Activated naive CD4-positive, alpha-beta T cell treated with anti-CD3 and anti-CD28 coated beads for 36 hours (primary cell): ENCODE measurements at regions of chr7 and their contacts with region 1.

Region 1: GRCh38 chr7:24965831-24966709 is 13.9 kb downstream of the OSBPL3 start:
- DNase-seq: peak; percentile 68
- H3K4me3 Mint-ChIP-seq: peak overlapping the region; percentile 17
- H3K27ac Mint-ChIP-seq: peak overlapping the region; percentile 77
- H3K4me1 Mint-ChIP-seq: peaks cover 77% of the 10 kb centered on the region
- H3K27me3 Mint-ChIP-seq: no peaks in the 10 kb centered on the region

Region 2: DNA sequence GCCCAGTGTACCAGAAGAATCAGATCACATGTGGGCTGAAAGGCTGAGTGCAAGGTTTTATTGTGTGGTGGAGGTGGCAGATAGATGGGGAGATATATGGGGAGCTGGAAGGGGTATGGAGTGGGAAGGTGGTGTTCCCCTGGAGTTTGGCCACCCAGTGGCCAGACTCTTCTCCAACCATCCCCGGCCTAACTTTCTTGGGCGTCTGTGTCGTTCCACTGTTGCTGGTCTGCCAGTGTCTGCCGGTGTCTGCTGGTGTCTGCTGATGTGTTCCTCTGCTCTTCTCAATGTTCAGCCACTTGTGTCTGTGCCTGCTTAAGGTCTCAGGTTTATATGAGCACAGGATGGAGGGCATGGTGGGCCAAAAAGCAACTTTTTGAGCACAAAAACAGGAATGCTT is 471.2 kb before region 1 on chr7:
- CTCF ChIA-PET with region 1: no interaction called
- intact Hi-C with region 1: no loop called
- DNase-seq: no peak
- H3K4me3 Mint-ChIP-seq: no peak overlapping the region
- H3K27ac Mint-ChIP-seq: no peak overlapping the region
- H3K4me1 Mint-ChIP-seq: no peaks in the 10 kb centered on the region
- H3K27me3 Mint-ChIP-seq: peaks cover 8% of the 10 kb centered on the region

Region 3: GRCh38 chr7:24764972-24765744 is 200.9 kb before region 1 on chr7:
- CTCF ChIA-PET with region 1: no interaction called
- intact Hi-C with region 1: no loop called
- DNase-seq: no peak
- H3K4me3 Mint-ChIP-seq: no peak overlapping the region
- H3K27ac Mint-ChIP-seq: no peak overlapping the region
- H3K4me1 Mint-ChIP-seq: no peaks in the 10 kb centered on the region
- H3K27me3 Mint-ChIP-seq: peaks cover 38% of the 10 kb centered on the region

Region 4: DNA sequence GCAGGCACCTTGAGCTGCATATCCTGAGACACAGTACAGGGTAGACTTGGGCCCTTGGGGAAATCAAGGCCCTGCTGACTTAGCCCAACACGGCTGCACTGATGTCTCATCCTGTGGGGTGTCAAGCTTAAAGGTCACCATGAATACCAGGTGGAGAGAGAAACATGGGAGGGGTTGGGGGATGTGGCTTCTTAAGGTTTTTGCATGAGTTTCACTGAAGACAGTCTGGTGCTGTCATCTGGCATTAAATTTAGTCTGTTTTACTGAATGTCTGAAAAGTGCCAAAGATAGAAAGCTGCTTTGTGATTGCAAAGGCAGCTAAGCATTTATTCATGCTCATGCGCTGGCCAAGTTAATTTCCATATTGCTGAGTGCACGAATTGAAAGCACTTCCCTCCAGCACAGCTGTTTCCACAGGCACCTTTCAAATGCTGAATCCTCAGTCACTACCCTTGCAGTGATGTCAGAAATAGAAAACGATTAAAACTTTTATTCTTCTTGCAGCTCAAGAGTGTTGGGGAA is 88.2 kb before region 1 on chr7:
- CTCF ChIA-PET with region 1: interaction called, 3 read pairs
- intact Hi-C with region 1: loop called (anchors 1 kb)
- DNase-seq: peak; percentile 53
- H3K4me3 Mint-ChIP-seq: no peak overlapping the region
- H3K27ac Mint-ChIP-seq: no peak overlapping the region
- H3K4me1 Mint-ChIP-seq: peaks cover 52% of the 10 kb centered on the region
- H3K27me3 Mint-ChIP-seq: no peaks in the 10 kb centered on the region

Region 5: GRCh38 chr7:24952464-24952863 is 13.6 kb before region 1 on chr7:
- CTCF ChIA-PET with region 1: interaction called, 4 read pairs
- intact Hi-C with region 1: loop called (anchors 1 kb)
- DNase-seq: no peak
- H3K4me3 Mint-ChIP-seq: no peak overlapping the region
- H3K27ac Mint-ChIP-seq: no peak overlapping the region
- H3K4me1 Mint-ChIP-seq: peaks cover 45% of the 10 kb centered on the region
- H3K27me3 Mint-ChIP-seq: no peaks in the 10 kb centered on the region

Region 6: DNA sequence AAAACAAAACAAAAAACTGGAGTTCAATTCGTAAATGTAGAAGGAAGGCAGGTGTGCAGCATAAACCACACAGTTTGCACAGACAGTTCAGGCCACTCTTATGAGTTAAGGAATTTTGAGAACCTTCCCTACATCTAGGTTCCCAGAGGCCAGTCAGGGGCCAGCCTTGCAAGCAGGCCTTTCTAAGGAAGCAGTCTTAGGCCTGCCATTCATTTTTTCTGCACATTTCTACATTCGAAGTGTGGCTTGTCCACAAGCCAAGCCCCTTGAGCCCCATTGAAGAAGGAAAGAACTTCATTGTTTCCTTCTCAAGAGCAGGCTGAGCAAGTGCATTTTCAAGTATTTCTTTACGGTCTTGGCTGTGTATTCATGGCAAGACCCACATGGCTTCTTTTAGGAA is 25.3 kb after region 1 on chr7:
- CTCF ChIA-PET with region 1: no interaction called
- intact Hi-C with region 1: no loop called
- DNase-seq: no peak
- H3K4me3 Mint-ChIP-seq: no peak overlapping the region
- H3K27ac Mint-ChIP-seq: no peak overlapping the region
- H3K4me1 Mint-ChIP-seq: no peaks in the 10 kb centered on the region
- H3K27me3 Mint-ChIP-seq: no peaks in the 10 kb centered on the region